ENCODE measurements at regions of chr17 and their contacts with region 1.

Region 1: DNA sequence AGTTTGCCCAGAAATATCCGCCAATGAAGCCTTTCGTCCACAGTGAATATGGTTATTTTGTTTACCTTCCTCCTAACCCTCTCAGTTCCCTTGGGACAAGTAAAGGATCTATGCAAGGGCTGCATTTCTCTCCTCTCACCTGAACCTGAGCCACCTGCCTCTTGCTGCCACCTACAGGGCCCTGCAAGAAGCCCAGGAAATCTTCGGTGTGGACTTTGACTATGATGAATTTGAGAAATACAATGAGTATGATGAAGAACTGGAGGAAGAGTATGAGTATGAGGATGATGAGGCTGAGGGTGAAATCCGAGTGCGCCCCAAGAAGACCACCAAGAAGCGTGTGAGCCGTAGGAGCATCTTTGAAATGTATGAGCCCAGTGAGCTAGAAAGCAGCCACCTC is 14.0 kb downstream of the SUPT6H start:
- DNase-seq: no peak
- ATAC-seq: no peak
- H3K4me3 Mint-ChIP-seq: no peak overlapping the region
- H3K27ac Mint-ChIP-seq: no peak overlapping the region
- H3K4me1 Mint-ChIP-seq: no peaks in the 10 kb centered on the region
- H3K27me3 Mint-ChIP-seq: no peaks in the 10 kb centered on the region

Region 2: GRCh38 chr17:28661635-28662537 is 14.1 kb before region 1 on chr17 and contains the starts of genes SDF2 and SUPT6H:
- CTCF ChIA-PET with region 1: interaction called, 10 read pairs
- DNase-seq: peak; percentile 95
- ATAC-seq: peak; percentile 90
- H3K4me3 Mint-ChIP-seq: peak within 1 kb of the TSS; percentile 97
- H3K27ac Mint-ChIP-seq: peak within 1 kb of the TSS; percentile 99
- H3K4me1 Mint-ChIP-seq: peaks cover 48% of the 10 kb centered on the region
- H3K27me3 Mint-ChIP-seq: no peaks in the 10 kb centered on the region
- total RNA-seq, gene SDF2: 45.9 to 48.9 TPM
- total RNA-seq, gene SUPT6H: 64.7 to 81.2 TPM

Measured in activated CD8-positive, alpha-beta memory T cell treated with anti-CD3 and anti-CD28 coated beads, Interleukin-2, amount 10 ng/mL, durations not matched to agents 7 days and 5 days (primary cell).